ENCODE measurements at regions of chr14 and their contacts with region 1.

Region 1: GRCh38 chr14:51860164-51860824 is at the start of gene GNG2:
- DNase-seq: peak; percentile 68 to 94 (median 78)
- ATAC-seq: peak; percentile 97
- H3K4me3 ChIP-seq: peak within 1 kb of the TSS; percentile 83
- H3K4me3 Mint-ChIP-seq: peak within 1 kb of the TSS; percentile 93
- H3K27ac ChIP-seq: peak within 1 kb of the TSS; percentile 80 to 88
- H3K27ac Mint-ChIP-seq: peak within 1 kb of the TSS; percentile 96
- H3K4me1 ChIP-seq: peaks cover 32% of the 10 kb centered on the region
- H3K4me1 Mint-ChIP-seq: peaks cover 69% of the 10 kb centered on the region
- H3K27me3 ChIP-seq: no peaks in the 10 kb centered on the region
- H3K27me3 Mint-ChIP-seq: no peaks in the 10 kb centered on the region
- CTCF ChIP-seq: no peak
- total RNA-seq, gene GNG2: 138 to 139 TPM

Region 2: DNA sequence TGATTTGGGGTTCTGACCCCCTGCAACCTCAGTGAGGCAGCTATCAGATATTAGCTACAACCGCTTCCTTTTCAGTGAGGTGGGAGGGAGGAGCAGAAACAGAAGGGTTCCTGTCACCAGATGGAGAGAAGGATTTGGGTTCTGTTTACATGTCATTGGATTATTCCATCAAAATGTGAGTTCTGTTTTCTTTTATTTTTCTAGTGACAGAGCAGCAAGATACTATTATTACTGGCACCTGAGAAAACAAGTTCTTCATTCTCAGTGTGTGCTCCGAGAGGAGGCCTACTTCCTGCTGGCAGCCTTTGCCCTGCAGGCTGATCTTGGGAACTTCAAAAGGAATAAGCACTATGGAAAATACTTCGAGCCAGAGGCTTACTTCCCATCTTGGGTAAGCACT is 155.7 kb before region 1 on chr14:
- CTCF ChIA-PET with region 1: no interaction called
- POLR2A ChIA-PET with region 1: no interaction called
- intact Hi-C with region 1: no loop called
- DNase-seq: no peak
- ATAC-seq: no peak
- H3K4me3 ChIP-seq: no peak overlapping the region
- H3K4me3 Mint-ChIP-seq: no peak overlapping the region
- H3K27ac ChIP-seq: no peak overlapping the region
- H3K27ac Mint-ChIP-seq: no peak overlapping the region
- H3K4me1 ChIP-seq: no peaks in the 10 kb centered on the region
- H3K4me1 Mint-ChIP-seq: no peaks in the 10 kb centered on the region
- H3K27me3 ChIP-seq: no peaks in the 10 kb centered on the region
- H3K27me3 Mint-ChIP-seq: no peaks in the 10 kb centered on the region
- CTCF ChIP-seq: no peak

Region 3: DNA sequence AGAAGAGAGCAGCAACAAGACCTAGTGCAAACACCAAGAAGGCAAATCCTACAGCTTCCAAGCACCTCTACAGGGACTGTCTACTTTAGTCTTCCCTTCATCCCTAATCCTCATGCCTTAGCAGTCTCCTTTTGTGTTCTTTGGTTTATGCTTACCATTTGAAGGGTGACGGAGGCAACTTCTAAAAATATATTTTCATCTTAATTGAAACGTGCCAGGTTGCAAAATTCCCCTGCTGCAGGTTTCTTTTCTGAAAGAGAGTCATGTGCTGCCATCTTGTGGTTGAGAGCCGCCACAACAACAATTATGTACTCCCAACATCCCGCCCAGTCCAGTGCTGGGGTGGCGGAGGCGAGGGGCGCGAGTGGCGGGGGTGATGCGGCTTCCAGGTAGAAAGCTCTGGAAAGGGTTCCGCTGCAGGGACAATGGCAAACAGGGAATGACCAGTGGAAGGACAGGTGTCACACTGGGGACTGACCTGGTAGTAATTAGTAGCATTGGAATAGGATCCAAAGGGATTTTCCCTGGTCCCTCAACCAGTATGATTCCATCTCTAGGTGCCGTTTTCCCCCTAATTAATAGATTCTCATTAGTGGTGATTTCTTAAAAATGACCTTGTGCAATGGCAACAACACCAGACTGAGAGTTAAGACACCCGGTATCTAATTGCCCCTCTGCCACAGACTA is 80.1 kb before region 1 on chr14:
- CTCF ChIA-PET with region 1: interaction called, 3 read pairs
- POLR2A ChIA-PET with region 1: interaction called, 3 read pairs
- intact Hi-C with region 1: loop called in 1 of 2 experiments (anchors 5 kb)
- DNase-seq: peak; percentile 51 to 87 (median 65)
- ATAC-seq: peak; percentile 71
- H3K4me3 ChIP-seq: no peak overlapping the region
- H3K4me3 Mint-ChIP-seq: no peak overlapping the region
- H3K27ac ChIP-seq: no peak overlapping the region
- H3K27ac Mint-ChIP-seq: no peak overlapping the region
- H3K4me1 ChIP-seq: peaks cover 13% of the 10 kb centered on the region
- H3K4me1 Mint-ChIP-seq: peaks cover 28% of the 10 kb centered on the region
- H3K27me3 ChIP-seq: peaks cover 0 to 3% of the 10 kb centered on the region in 2 experiments
- H3K27me3 Mint-ChIP-seq: peaks cover 12% of the 10 kb centered on the region
- CTCF ChIP-seq: peak; percentile 87

Region 4: GRCh38 chr14:51884086-51884927 is 24.0 kb after region 1 on chr14:
- CTCF ChIA-PET with region 1: interaction called, 3 read pairs
- POLR2A ChIA-PET with region 1: interaction called, 36 read pairs
- intact Hi-C with region 1: loop called in 1 of 2 experiments (anchors 2 kb)
- DNase-seq: peak in 3 of 14 experiments; percentile 37 to 57 (median 42)
- ATAC-seq: peak; percentile 46
- H3K4me3 ChIP-seq: no peak overlapping the region
- H3K4me3 Mint-ChIP-seq: peak overlapping the region; percentile 44
- H3K27ac ChIP-seq: no peak overlapping the region
- H3K27ac Mint-ChIP-seq: peak overlapping the region; percentile 70
- H3K4me1 ChIP-seq: peaks cover 28% of the 10 kb centered on the region
- H3K4me1 Mint-ChIP-seq: peaks cover 90% of the 10 kb centered on the region
- H3K27me3 ChIP-seq: no peaks in the 10 kb centered on the region
- H3K27me3 Mint-ChIP-seq: no peaks in the 10 kb centered on the region
- CTCF ChIP-seq: no peak

Region 5: GRCh38 chr14:51908086-51908485 is 47.8 kb after region 1 on chr14:
- CTCF ChIA-PET with region 1: interaction called, 3 read pairs
- POLR2A ChIA-PET with region 1: interaction called, 5 read pairs
- intact Hi-C with region 1: loop called (anchors 5 to 10 kb)
- DNase-seq: no peak
- ATAC-seq: no peak
- H3K4me3 ChIP-seq: no peak overlapping the region
- H3K4me3 Mint-ChIP-seq: no peak overlapping the region
- H3K27ac ChIP-seq: no peak overlapping the region
- H3K27ac Mint-ChIP-seq: peak overlapping the region; percentile 20
- H3K4me1 ChIP-seq: peaks cover 45% of the 10 kb centered on the region
- H3K4me1 Mint-ChIP-seq: peaks cover 76% of the 10 kb centered on the region
- H3K27me3 ChIP-seq: no peaks in the 10 kb centered on the region
- H3K27me3 Mint-ChIP-seq: no peaks in the 10 kb centered on the region
- CTCF ChIP-seq: no peak

Region 6: DNA sequence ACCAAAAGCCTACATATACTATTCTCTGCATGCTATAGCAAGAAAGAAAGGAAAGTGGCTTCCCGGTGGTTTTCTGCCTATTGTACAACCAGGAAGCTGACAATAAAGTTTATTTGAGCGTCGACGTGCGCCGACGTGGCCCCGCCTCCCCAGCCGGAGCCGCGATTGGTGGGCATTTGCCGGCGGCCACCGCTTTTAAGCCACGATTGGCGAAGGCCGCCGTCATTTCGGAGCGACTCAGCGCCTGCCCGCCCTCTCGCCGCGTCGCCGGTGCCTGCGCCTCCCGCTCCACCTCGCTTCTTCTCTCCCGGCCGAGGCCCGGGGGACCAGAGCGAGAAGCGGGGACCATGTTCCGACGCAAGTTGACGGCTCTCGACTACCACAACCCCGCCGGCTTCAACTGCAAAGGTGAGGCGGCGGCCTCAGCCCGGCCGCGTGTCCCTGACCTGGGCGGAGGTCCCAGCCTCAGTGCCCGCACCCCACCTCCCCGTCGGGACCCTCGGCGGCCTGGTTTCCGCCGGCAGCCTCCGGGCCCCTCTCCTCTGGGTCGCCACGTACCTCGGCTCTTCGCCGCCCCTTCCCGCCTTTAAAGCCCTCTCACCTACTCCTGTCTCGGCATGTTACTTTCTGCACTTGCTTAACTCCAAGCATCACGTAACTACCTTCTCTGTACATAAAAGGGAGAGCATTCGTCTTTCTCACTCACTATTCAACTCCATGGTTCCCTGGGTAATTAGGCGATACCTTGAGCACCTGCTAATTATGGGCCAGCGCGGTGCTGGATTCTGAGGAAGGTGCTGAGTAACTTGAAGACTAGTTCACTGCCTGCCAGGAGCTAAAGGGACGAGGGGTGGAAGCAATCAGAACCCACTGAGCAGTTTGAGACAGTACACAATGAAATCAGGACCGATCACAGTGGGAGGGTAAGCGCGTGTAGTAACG is 129.3 kb after region 1 on chr14 and contains the start of gene RTRAF:
- CTCF ChIA-PET with region 1: no interaction called
- POLR2A ChIA-PET with region 1: interaction called, 4 read pairs
- intact Hi-C with region 1: loop called in 1 of 2 experiments (anchors 1 kb)
- DNase-seq: peak; percentile 83 to 97 (median 89)
- ATAC-seq: peak; percentile 96
- H3K4me3 ChIP-seq: peak within 1 kb of the TSS; percentile 87
- H3K4me3 Mint-ChIP-seq: peak within 1 kb of the TSS; percentile 99
- H3K27ac ChIP-seq: peak within 1 kb of the TSS; percentile 84 to 87
- H3K27ac Mint-ChIP-seq: peak within 1 kb of the TSS; percentile 94
- H3K4me1 ChIP-seq: peaks cover 18% of the 10 kb centered on the region
- H3K4me1 Mint-ChIP-seq: peaks cover 53% of the 10 kb centered on the region
- H3K27me3 ChIP-seq: no peaks in the 10 kb centered on the region
- H3K27me3 Mint-ChIP-seq: no peaks in the 10 kb centered on the region
- CTCF ChIP-seq: no peak
- total RNA-seq, gene RTRAF: 155 to 157 TPM

Measured in CD4-positive, alpha-beta T cell (primary cell).